Lower leg skin (tissue), 4 donors: ENCODE measurements at regions of chr2 and their contacts with region 1.

Region 1: GRCh38 chr2:105749583-105750400 is 5.1 kb downstream of the NCK2 start:
- DNase-seq: no peak
- H3K4me3 ChIP-seq: no peak overlapping the region
- CTCF ChIP-seq: no peak
- POLR2A ChIP-seq: no peak

Region 2: DNA sequence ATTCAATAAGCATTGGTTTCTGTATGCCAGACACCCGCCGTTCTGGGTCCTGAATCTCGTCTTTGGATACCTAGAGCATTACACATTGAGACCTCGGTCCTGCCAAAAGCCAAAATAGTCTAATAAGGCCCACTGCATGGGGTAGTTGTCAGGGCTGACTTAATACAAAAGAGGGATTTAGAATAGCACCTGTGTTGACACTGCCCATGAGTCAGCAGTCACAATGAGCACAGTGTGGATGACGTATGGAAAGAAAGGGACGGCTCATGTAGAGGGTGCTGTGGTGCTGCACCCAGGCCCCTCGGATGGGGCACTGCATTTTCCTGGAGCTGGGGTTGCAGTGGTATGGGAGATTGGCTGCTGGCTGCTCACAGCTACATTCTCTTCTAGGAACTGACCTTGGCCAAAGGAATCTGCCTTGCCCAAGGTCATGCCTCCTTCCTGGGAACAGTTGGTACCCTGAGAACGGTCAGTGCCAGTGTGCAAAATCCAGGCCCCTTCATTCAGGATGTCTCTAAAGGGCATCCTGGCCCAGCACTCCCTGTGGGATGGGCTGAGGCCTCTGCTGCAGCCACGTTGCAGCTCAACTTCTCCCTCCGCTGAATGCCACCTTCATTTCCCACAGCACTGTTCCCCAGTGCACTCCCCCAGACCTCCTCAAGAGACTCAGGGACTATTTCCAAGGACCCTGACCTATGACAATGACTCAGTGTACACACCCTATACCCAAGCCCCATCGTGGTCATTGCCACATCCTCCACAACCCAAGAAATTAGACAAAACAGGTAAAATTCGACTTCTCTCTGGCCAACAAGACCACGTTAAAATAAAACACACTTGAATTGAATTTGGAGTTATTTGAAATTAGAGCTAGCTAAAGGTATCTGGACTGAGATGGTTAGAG is 131.8 kb before region 1 on chr2:
- intact Hi-C with region 1: no loop called
- DNase-seq: no peak
- H3K4me3 ChIP-seq: no peak overlapping the region
- CTCF ChIP-seq: no peak
- POLR2A ChIP-seq: no peak

Region 3: GRCh38 chr2:105873721-105874120 is 123.9 kb after region 1 on chr2:
- intact Hi-C with region 1: loop called (anchors 10 kb)
- DNase-seq: peak in 1 of 2 donors; percentile 83
- H3K4me3 ChIP-seq: no peak overlapping the region
- CTCF ChIP-seq: no peak
- POLR2A ChIP-seq: no peak